Endothelial cell of umbilical vein (primary cell): ENCODE measurements at regions of chr3 and their contacts with region 1.

Region 1: DNA sequence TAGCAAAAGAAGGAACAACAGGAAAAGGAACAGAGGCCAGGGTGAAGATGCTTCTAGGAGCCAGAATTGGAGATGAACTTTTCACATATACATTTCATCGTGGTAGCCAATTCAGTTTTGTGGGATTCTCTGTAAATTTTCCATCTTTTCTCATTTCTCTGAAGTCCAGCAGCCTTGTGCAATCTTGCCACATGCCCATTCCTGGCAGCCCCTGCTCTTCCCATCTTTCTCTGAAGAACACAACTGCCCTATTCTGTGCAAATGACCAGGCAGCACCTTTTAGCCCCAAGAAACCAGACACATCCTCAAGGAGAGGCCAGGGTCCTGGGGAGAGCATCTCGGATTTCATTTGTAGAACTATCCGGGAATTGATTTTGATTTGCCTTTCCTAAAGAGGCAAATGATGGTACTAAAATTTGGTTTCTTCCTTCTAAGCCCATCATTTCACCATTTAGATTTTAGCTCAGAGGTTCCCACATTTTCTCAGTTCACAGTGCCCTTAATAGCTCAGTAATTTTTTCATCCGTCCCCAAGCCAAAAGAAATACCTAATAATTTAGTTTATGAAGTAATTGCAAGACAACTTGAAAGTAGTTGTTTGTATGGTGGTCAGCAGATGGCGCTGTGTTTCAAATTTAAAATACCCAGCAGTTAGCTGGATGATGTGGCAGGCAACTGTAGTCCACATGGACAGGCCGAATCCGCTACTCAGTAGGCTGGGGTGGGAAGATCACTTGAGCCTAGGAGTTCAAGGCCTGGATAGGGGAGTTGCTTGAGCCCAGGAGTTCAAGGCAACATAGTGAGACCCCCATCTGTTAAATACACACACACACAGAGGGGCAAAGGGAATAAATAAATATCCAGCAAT is 61.3 kb upstream of the ACKR4 start:
- DNase-seq: peak; percentile 85
- H3K4me3 ChIP-seq: no peak overlapping the region
- H3K27ac ChIP-seq: no peak overlapping the region
- H3K4me1 ChIP-seq: peaks cover 6% of the 10 kb centered on the region
- H3K27me3 ChIP-seq: no peaks in the 10 kb centered on the region
- CTCF ChIP-seq: peak; percentile 37 to 50
- POLR2A ChIP-seq: no peak

Region 2: GRCh38 chr3:132352541-132353143 is 183.2 kb before region 1 on chr3:
- CTCF ChIA-PET with region 1: interaction called, 3 read pairs
- POLR2A ChIA-PET with region 1: no interaction called
- dilution Hi-C with region 1: no loop called
- intact Hi-C with region 1: loop called (anchors 2 kb)
- DNase-seq: peak; percentile 77
- H3K4me3 ChIP-seq: no peak overlapping the region
- H3K27ac ChIP-seq: no peak overlapping the region
- H3K4me1 ChIP-seq: no peaks in the 10 kb centered on the region
- H3K27me3 ChIP-seq: peaks cover 0 to 4% of the 10 kb centered on the region in 2 experiments
- CTCF ChIP-seq: peak; percentile 78 to 84
- POLR2A ChIP-seq: no peak

Region 3: DNA sequence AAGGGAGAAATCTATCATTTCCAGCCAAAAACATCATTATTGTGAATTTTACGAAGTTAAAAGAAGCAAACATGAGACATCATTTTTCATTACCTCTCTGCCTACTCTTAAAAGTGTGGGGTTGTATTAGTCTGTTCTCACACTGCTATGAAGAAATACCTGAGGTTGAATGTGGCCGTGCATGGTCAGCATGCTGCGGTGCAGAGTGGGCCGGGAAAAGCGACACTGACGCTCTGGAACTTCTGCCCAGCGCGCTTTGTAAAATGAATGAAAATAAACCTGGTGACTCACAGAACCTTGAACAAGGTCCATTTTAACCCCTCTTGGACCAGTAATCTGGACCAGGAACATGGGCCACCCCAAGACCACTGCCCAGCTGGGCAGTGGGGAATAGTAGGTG is 149.5 kb before region 1 on chr3:
- CTCF ChIA-PET with region 1: no interaction called
- POLR2A ChIA-PET with region 1: no interaction called
- dilution Hi-C with region 1: no loop called
- intact Hi-C with region 1: no loop called
- DNase-seq: no peak
- H3K4me3 ChIP-seq: no peak overlapping the region
- H3K27ac ChIP-seq: no peak overlapping the region
- H3K4me1 ChIP-seq: no peaks in the 10 kb centered on the region
- H3K27me3 ChIP-seq: no peaks in the 10 kb centered on the region
- CTCF ChIP-seq: no peak
- POLR2A ChIP-seq: no peak

Region 4: GRCh38 chr3:132595014-132595413 is 59.2 kb after region 1 on chr3:
- CTCF ChIA-PET with region 1: interaction called, 15 read pairs
- POLR2A ChIA-PET with region 1: no interaction called
- dilution Hi-C with region 1: no loop called
- intact Hi-C with region 1: no loop called
- DNase-seq: peak; percentile 65
- H3K4me3 ChIP-seq: no peak overlapping the region
- H3K27ac ChIP-seq: peak overlapping the region; percentile 90
- H3K4me1 ChIP-seq: peaks cover 40% of the 10 kb centered on the region
- H3K27me3 ChIP-seq: no peaks in the 10 kb centered on the region
- CTCF ChIP-seq: no peak
- POLR2A ChIP-seq: no peak

Region 5: GRCh38 chr3:132659365-132660051 is 123.7 kb after region 1 on chr3 and contains the start of gene ACAD11:
- CTCF ChIA-PET with region 1: interaction called, 14 read pairs
- POLR2A ChIA-PET with region 1: no interaction called
- dilution Hi-C with region 1: no loop called
- intact Hi-C with region 1: no loop called
- DNase-seq: peak; percentile 85
- H3K4me3 ChIP-seq: peak within 1 kb of the TSS; percentile 43 to 71 (median 70)
- H3K27ac ChIP-seq: peak within 1 kb of the TSS; percentile 68
- H3K4me1 ChIP-seq: peaks cover 28% of the 10 kb centered on the region
- H3K27me3 ChIP-seq: no peaks in the 10 kb centered on the region
- CTCF ChIP-seq: peak; percentile 66 to 70
- POLR2A ChIP-seq: no peak
- total RNA-seq, gene ACAD11: 9.6 and 15.2 TPM in 2 replicates

Region 6: GRCh38 chr3:132682201-132682600 is 146.4 kb after region 1 on chr3:
- CTCF ChIA-PET with region 1: interaction called, 12 read pairs
- POLR2A ChIA-PET with region 1: no interaction called
- dilution Hi-C with region 1: no loop called
- intact Hi-C with region 1: no loop called
- DNase-seq: no peak
- H3K4me3 ChIP-seq: no peak overlapping the region
- H3K27ac ChIP-seq: no peak overlapping the region
- H3K4me1 ChIP-seq: no peaks in the 10 kb centered on the region
- H3K27me3 ChIP-seq: no peaks in the 10 kb centered on the region
- CTCF ChIP-seq: no peak
- POLR2A ChIP-seq: no peak

Region 7: DNA sequence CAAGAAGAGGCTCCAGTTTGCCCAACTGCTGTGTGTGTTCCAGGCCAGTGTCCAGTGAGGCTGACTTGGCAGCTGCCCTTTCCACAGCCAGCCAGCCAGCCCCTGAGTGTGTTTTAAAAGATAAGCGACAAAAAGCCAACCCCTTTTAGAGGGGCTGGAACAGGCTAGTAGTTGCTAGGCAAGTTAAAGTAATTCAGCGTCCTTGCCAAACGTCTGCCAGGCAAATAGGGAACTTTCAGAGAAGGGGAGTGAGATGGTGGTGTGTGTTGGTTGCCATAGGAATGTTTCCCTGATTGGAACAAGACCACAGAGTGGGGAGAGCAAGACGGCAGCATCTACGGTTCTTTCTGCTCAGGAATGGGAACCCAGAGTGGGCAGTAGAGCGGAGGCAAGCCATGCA is 588.7 kb after region 1 on chr3:
- CTCF ChIA-PET with region 1: no interaction called
- POLR2A ChIA-PET with region 1: no interaction called
- dilution Hi-C with region 1: no loop called
- intact Hi-C with region 1: no loop called
- DNase-seq: no peak
- H3K4me3 ChIP-seq: no peak overlapping the region
- H3K27ac ChIP-seq: no peak overlapping the region
- H3K4me1 ChIP-seq: no peaks in the 10 kb centered on the region
- H3K27me3 ChIP-seq: peaks cover 0 to 2% of the 10 kb centered on the region in 2 experiments
- CTCF ChIP-seq: no peak
- POLR2A ChIP-seq: no peak